ENCODE measurements at regions of chr7 and their contacts with region 1.

Region 1: GRCh38 chr7:8436965-8437364 is 3.6 kb downstream of the NXPH1 start:
- DNase-seq: peak; percentile 78
- CTCF ChIP-seq: peak; percentile 89

Region 2: GRCh38 chr7:8724080-8724718 is 287.2 kb after region 1 on chr7:
- in situ Hi-C with region 1: loop called (anchors 25 kb)
- DNase-seq: peak; percentile 59
- CTCF ChIP-seq: peak; percentile 80

Measured in GM13976 (cell line).